Astrocyte of the cerebellum (primary cell): ENCODE measurements at regions of chr11 and their contacts with region 1.

Region 1: DNA sequence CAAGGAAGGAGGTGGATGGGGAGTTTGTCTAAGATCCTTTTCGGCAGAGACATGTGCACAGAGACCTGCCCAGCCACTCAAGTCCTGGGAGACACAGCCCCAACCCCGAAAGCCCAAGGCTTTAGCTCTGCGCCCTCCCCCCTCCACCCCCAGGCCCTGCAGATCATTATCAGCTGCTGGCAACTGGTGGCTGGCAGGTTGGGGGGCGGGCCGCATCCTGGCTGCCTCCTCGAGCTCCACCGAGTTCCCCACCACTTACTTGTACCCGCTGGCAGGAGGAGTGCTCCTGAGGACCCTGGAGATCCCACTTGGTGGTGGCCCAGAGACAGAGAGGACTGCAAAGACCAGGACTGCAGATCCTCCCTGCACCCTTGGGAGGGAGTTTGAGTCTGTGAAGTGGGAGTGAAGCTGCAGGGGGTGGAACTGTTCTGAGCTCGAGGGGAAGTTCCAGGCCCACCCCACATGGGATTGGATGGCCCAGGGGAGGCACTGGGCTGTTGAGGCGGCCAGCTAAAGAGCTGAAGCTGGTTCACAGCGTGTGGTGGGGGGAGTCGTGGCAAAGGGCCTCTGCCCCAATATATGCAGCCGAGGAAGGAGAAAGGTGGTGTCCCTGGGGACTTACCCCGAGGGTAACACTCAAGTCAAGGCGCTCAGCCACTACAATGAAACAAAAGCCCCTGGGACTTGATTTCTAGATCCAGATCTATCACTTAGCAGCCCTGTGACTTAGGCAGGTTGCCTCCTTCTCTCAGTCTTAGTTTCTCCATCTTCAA is 19.9 kb upstream of the CCDC86 start:
- DNase-seq: no peak
- H3K4me3 ChIP-seq: no peak overlapping the region
- CTCF ChIP-seq: no peak

Region 2: DNA sequence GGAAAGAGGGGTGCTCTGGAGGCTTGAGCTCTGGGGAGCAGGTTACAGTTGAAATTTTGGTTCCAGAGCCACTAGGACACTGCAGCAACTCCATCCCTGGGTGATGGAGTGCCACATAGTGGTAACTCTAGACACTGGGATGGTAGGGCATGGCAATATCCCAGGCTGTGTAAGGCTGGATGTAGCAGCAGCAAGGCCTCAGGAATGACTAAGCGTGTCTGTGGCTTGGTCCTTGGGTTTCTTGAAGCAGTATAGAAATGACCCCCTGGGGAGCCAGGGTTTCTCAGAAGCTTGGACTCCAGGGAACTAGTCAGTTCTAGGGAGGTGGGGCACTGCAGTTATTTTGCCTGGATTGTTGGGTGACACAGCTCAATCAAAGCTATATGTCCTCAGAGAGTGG is 533.5 kb before region 1 on chr11:
- in situ Hi-C with region 1: no loop called
- DNase-seq: no peak
- H3K4me3 ChIP-seq: no peak overlapping the region
- CTCF ChIP-seq: no peak

Region 3: GRCh38 chr11:60775420-60775961 is 46.5 kb before region 1 on chr11:
- in situ Hi-C with region 1: loop called (anchors 5 kb)
- DNase-seq: peak; percentile 78
- H3K4me3 ChIP-seq: no peak overlapping the region
- CTCF ChIP-seq: peak; percentile 94

Region 4: GRCh38 chr11:60866911-60867870 is 45.2 kb after region 1 on chr11 and contains the start of gene ZP1:
- in situ Hi-C with region 1: loop called (anchors 5 kb)
- DNase-seq: no peak
- H3K4me3 ChIP-seq: no peak within 1 kb of the TSS
- CTCF ChIP-seq: no peak

Region 5: GRCh38 chr11:60915248-60915914 is 93.4 kb after region 1 on chr11:
- in situ Hi-C with region 1: loop called (anchors 5 kb)
- DNase-seq: no peak
- H3K4me3 ChIP-seq: peak overlapping the region; percentile 85
- CTCF ChIP-seq: peak; percentile 41